ENCODE measurements at regions of chr7 and their contacts with region 1.

Region 1: DNA sequence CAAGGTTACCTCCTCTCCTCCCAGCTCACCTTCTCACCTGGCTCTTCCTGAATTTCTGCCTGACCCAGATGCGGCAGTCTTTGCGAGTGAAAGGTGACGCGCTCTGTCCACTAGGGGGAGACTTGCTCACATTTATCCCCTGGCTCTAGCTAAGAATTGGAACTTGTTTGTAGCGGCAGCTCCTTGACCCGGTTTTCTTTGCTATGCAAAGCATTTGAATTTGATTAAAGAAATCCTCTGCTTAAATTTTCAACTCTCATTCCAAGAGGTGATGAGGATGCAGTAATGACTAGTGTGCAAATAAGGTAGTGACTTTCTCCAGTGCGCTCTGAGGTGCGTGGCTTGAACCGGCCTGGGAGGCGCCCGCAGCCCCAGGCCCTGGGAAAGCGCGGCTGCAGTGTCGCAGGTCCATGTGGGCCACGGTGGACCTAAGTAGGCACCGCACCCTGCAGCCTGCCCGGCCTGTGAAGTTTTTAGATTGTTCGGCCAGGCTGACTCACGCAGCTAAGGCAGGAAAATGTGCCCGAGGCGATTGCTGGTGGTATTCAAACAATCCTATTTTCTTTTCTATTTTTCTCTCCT is 336.9 kb upstream of the NPSR1 start:
- DNase-seq: peak; percentile 72
- H3K4me3 ChIP-seq: no peak overlapping the region
- H3K27ac ChIP-seq: no peak overlapping the region
- H3K4me1 ChIP-seq: no peaks in the 10 kb centered on the region
- H3K27me3 ChIP-seq: no peaks in the 10 kb centered on the region
- CTCF ChIP-seq: peak; percentile 69 to 76 (median 74)
- POLR2A ChIP-seq: no peak

Region 2: GRCh38 chr7:34133983-34134782 is 186.9 kb before region 1 on chr7:
- intact Hi-C with region 1: loop called (anchors 10 kb)
- DNase-seq: peak; percentile 85
- H3K4me3 ChIP-seq: no peak overlapping the region
- H3K27ac ChIP-seq: peak overlapping the region; percentile 55 to 59
- H3K4me1 ChIP-seq: peaks cover 6% of the 10 kb centered on the region
- H3K27me3 ChIP-seq: no peaks in the 10 kb centered on the region
- CTCF ChIP-seq: peak; percentile 44 to 81 (median 73)
- POLR2A ChIP-seq: no peak

Region 3: GRCh38 chr7:34486371-34486770 is 165.3 kb after region 1 on chr7:
- intact Hi-C with region 1: no loop called
- DNase-seq: peak; percentile 65
- H3K4me3 ChIP-seq: no peak overlapping the region
- H3K27ac ChIP-seq: no peak overlapping the region
- H3K4me1 ChIP-seq: no peaks in the 10 kb centered on the region
- H3K27me3 ChIP-seq: no peaks in the 10 kb centered on the region
- CTCF ChIP-seq: no peak
- POLR2A ChIP-seq: no peak

Measured in prostate gland (tissue), 2 donors.